Calu3 (cell line): ENCODE measurements at regions of chr3 and their contacts with region 1.

Region 1: DNA sequence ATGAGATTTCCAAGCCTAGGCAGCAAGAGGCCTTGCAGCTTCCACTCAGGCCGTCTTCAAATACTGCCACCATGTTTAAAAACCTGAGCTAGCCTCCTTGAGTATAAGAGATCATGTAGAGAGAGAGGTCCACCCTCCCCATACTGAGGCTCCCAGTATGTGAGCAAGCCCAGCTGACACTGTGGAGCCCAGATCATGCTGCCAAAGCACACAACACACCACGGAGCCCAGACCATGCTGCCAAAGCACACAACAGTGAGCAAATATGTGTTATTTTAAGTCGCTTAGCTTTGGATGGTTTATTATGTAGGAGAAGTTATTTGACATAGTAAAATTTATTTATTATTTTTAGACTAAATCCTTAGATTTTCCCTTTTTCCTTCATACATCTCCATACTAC is 333.7 kb downstream of the CTNNB1 start:
- DNase-seq: no peak
- H3K4me3 Mint-ChIP-seq: no peak overlapping the region
- H3K27ac Mint-ChIP-seq: no peak overlapping the region
- H3K4me1 Mint-ChIP-seq: no peaks in the 10 kb centered on the region
- H3K27me3 Mint-ChIP-seq: no peaks in the 10 kb centered on the region
- CTCF ChIP-seq: no peak

Region 2: GRCh38 chr3:40148827-40149226 is 1384.1 kb before region 1 on chr3:
- CTCF ChIA-PET with region 1: no interaction called
- intact Hi-C with region 1: loop called (anchors 5 kb)
- DNase-seq: no peak
- H3K4me3 Mint-ChIP-seq: no peak overlapping the region
- H3K27ac Mint-ChIP-seq: no peak overlapping the region
- H3K4me1 Mint-ChIP-seq: no peaks in the 10 kb centered on the region
- H3K27me3 Mint-ChIP-seq: no peaks in the 10 kb centered on the region
- CTCF ChIP-seq: no peak

Region 3: GRCh38 chr3:41482134-41482533 is 50.8 kb before region 1 on chr3:
- CTCF ChIA-PET with region 1: no interaction called
- intact Hi-C with region 1: no loop called
- DNase-seq: no peak
- H3K4me3 Mint-ChIP-seq: no peak overlapping the region
- H3K27ac Mint-ChIP-seq: no peak overlapping the region
- H3K4me1 Mint-ChIP-seq: no peaks in the 10 kb centered on the region
- H3K27me3 Mint-ChIP-seq: no peaks in the 10 kb centered on the region
- CTCF ChIP-seq: no peak